Mammary epithelial cell (primary cell): ENCODE measurements at regions of chrX and their contacts with region 1.

Region 1: GRCh38 chrX:106611679-106612392 is at the start of gene RADX:
- DNase-seq: peak; percentile 68
- H3K4me3 ChIP-seq: peak within 1 kb of the TSS; percentile 36 to 58 (median 43)
- H3K27ac ChIP-seq: peak within 1 kb of the TSS; percentile 58
- H3K4me1 ChIP-seq: no peaks in the 10 kb centered on the region
- H3K27me3 ChIP-seq: no peaks in the 10 kb centered on the region
- CTCF ChIP-seq: no peak
- total RNA-seq, gene RADX: 3.9 to 5.2 TPM

Region 2: DNA sequence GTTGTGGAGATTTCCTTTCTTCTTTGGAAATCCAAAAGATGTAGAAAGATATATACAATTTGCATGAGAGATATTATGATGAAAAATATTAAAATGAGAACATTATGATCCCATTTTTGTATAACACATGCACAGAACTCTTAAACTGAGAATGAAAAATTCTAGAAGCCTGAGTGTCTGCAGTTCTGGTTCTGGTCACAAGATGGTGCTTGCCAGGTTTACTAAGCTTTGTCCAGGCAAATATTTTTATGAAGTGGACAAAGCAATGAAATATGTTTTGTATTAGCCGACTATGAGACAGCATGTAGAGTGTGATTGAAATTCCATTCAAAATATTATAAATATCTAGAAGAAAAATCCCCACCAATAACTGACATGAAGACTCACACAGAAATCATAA is 441.5 kb before region 1 on chrX:
- CTCF ChIA-PET with region 1: no interaction called
- dilution Hi-C with region 1: no loop called
- in situ Hi-C with region 1: no loop called
- intact Hi-C with region 1: no loop called
- DNase-seq: peak; percentile 8
- H3K4me3 ChIP-seq: no peak overlapping the region
- H3K27ac ChIP-seq: no peak overlapping the region
- H3K4me1 ChIP-seq: no peaks in the 10 kb centered on the region
- H3K27me3 ChIP-seq: peaks cover 2% of the 10 kb centered on the region
- CTCF ChIP-seq: peak; percentile 61 to 73

Region 3: GRCh38 chrX:106481341-106481740 is 130.5 kb before region 1 on chrX:
- CTCF ChIA-PET with region 1: no interaction called
- dilution Hi-C with region 1: no loop called
- in situ Hi-C with region 1: no loop called
- intact Hi-C with region 1: loop called (anchors 10 kb)
- DNase-seq: peak; percentile 42
- H3K4me3 ChIP-seq: no peak overlapping the region
- H3K27ac ChIP-seq: no peak overlapping the region
- H3K4me1 ChIP-seq: no peaks in the 10 kb centered on the region
- H3K27me3 ChIP-seq: peaks cover 5% of the 10 kb centered on the region
- CTCF ChIP-seq: peak; percentile 79 to 81

Region 4: GRCh38 chrX:106726485-106727437 is 114.9 kb after region 1 on chrX and contains the start of gene RNF128:
- CTCF ChIA-PET with region 1: no interaction called
- dilution Hi-C with region 1: no loop called
- in situ Hi-C with region 1: no loop called
- intact Hi-C with region 1: loop called (anchors 2 kb)
- DNase-seq: peak; percentile 62
- H3K4me3 ChIP-seq: peak within 1 kb of the TSS; percentile 51 to 72 (median 71)
- H3K27ac ChIP-seq: peak within 1 kb of the TSS; percentile 13
- H3K4me1 ChIP-seq: peaks cover 7% of the 10 kb centered on the region
- H3K27me3 ChIP-seq: no peaks in the 10 kb centered on the region
- CTCF ChIP-seq: no peak
- total RNA-seq, gene RNF128: 2.0 to 25.3 TPM